Heart left ventricle (tissue), 16 donors: ENCODE measurements at regions of chr15 and their contacts with region 1.

Region 1: GRCh38 chr15:65318870-65319356 is 14.4 kb downstream of the RNU5B-1 start:
- DNase-seq: peak; percentile 74 to 83 (median 77)
- ATAC-seq: peak; percentile 79 to 91 (median 90)
- H3K4me3 ChIP-seq: no peak overlapping the region
- H3K27ac ChIP-seq: no peak overlapping the region
- H3K4me1 ChIP-seq: peaks cover 0 to 8% (median 0%) of the 10 kb centered on the region in 12 donors
- H3K27me3 ChIP-seq: no peaks in the 10 kb centered on the region
- CTCF ChIP-seq: peak; percentile 89 to 96 (median 92)
- POLR2A ChIP-seq: no peak

Region 2: DNA sequence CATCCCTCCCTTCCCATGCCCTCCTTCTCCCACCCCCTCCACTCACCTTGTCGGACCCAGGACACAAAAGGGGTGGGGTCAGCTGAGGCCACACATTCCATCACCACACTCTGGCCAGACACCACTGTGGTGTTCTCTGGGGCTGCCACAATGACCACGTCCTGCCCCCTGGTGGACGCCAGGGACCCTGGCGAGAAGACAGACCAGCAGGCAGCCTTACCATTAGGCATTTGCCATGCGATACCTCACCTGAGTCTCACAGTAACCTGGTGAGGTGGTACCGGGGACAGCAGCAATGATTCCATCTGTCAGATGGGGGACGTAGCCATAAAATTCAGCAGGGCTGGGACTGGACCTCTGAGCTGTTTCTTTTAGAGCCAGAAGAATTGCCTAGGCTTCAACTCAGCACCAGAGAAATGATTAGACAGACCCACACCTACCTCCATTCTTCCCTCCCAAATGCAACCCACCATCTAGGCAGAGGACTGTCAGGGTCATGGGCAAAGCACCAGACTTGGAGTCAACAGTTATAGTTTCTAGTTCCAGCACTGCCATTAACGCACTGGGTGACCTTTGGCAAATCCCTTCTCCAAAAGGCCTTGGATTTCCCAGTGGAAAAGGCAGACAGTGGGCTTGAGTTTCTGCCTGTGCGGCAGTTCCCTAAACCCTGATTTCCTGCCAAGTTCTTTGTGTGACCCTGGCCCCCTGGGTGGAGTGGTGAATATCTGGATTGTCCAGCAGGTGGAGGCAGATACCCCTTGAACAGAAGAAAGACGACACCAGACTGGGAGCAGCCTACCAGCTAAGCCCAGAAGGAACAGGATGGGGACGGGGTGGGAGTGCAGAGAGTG is 82.1 kb after region 1 on chr15:
- intact Hi-C with region 1: loop called in 3 of 10 experiments (anchors 1 to 5 kb)
- DNase-seq: peak in 4 of 5 donors; percentile 38 to 65 (median 52)
- ATAC-seq: peak; percentile 71 to 87 (median 82)
- H3K4me3 ChIP-seq: no peak overlapping the region
- H3K27ac ChIP-seq: no peak overlapping the region
- H3K4me1 ChIP-seq: peaks cover 0 to 20% (median 0%) of the 10 kb centered on the region in 12 donors
- H3K27me3 ChIP-seq: peaks cover 5 to 25% (median 22%) of the 10 kb centered on the region in 9 donors
- CTCF ChIP-seq: peak; percentile 42 to 71 (median 57)
- POLR2A ChIP-seq: no peak